H1 (cell line): ENCODE measurements at regions of chr12 and their contacts with region 1.

Region 1: GRCh38 chr12:52147367-52147972 is 44.3 kb downstream of the KRT80 start:
- DNase-seq: no peak
- H3K4me3 ChIP-seq: no peak overlapping the region
- H3K27ac ChIP-seq: peak overlapping the region; percentile 73
- H3K4me1 ChIP-seq: peaks cover 8 to 44% (median 19%) of the 10 kb centered on the region in 4 experiments
- H3K27me3 ChIP-seq: no peaks in the 10 kb centered on the region; a peak in 1 of 7 replicates
- CTCF ChIP-seq: no peak
- EP300 ChIP-seq: no peak
- POLR2A ChIP-seq: no peak
- RAD21 ChIP-seq: no peak

Region 2: DNA sequence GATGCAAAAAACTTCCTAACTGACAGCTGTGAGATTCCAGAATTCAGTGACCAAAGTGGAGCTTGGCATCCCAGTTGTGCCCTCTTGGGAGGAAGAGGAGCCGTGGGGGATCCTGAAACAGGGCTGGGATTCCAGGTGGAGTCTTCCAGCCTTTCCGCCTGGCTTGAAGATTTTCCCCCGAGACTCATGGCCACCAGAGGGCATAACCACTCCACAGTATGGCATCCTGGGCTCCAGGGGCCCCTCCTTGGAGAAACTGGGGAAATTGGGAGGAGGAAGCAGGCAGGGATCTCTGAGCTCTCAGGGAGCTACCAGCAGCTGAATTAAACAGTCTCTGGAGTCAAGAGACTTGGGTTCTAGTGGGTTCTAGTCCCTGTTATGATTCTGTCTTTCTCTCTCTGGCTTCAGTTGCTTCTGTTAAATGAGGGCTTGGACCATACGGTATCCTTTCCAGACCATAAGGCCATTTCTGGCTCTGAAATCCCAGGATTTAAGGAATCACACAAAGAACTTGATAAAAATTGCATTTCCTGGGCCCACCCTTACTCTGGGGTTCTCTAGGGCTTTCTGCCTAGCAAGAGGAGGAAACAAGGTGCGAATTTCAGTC is 143.3 kb before region 1 on chr12:
- CTCF ChIA-PET with region 1: no interaction called
- POLR2A ChIA-PET with region 1: no interaction called
- DNase-seq: peak in 1 of 2 experiments; percentile 81
- H3K4me3 ChIP-seq: no peak overlapping the region
- H3K27ac ChIP-seq: no peak overlapping the region
- H3K4me1 ChIP-seq: peaks cover 0 to 16% (median 8%) of the 10 kb centered on the region in 4 experiments; a peak in 6 of 7 replicates
- H3K27me3 ChIP-seq: peaks cover 19 to 47% (median 44%) of the 10 kb centered on the region in 4 experiments
- CTCF ChIP-seq: peak in 2 of 3 experiments; percentile 83 to 93; a peak in 3 of 4 replicates
- EP300 ChIP-seq: no peak
- POLR2A ChIP-seq: no peak
- RAD21 ChIP-seq: peak; percentile 91 to 95

Region 3: DNA sequence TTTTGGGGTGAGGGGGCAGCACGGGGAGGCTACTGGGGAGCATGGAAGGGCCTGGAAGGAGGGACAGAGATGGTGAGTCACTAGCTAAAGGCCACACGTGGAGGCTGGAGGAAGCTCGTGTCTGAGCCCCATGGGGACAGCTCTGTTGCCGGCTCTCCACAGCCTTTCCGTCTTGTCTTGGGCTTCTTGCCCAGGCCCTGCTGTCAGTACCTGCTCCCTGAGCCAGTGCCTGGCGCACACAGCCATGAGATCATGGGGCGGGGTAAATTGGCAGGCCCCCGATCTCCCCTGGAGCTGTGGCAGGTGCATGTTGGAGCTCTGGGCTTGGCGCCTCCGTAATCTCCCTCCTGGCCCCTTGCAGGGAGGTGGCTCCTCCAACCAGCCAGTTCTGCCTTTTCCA is 60.4 kb after region 1 on chr12:
- CTCF ChIA-PET with region 1: interaction called, 24 read pairs
- POLR2A ChIA-PET with region 1: no interaction called
- DNase-seq: no peak
- H3K4me3 ChIP-seq: no peak overlapping the region
- H3K27ac ChIP-seq: no peak overlapping the region
- H3K4me1 ChIP-seq: peaks cover 0 to 7% (median 2%) of the 10 kb centered on the region in 4 experiments; a peak in 3 of 7 replicates
- H3K27me3 ChIP-seq: no peaks in the 10 kb centered on the region
- CTCF ChIP-seq: no peak
- EP300 ChIP-seq: no peak
- POLR2A ChIP-seq: no peak
- RAD21 ChIP-seq: no peak